ENCODE measurements at regions of chr19 and their contacts with region 1.

Region 1: DNA sequence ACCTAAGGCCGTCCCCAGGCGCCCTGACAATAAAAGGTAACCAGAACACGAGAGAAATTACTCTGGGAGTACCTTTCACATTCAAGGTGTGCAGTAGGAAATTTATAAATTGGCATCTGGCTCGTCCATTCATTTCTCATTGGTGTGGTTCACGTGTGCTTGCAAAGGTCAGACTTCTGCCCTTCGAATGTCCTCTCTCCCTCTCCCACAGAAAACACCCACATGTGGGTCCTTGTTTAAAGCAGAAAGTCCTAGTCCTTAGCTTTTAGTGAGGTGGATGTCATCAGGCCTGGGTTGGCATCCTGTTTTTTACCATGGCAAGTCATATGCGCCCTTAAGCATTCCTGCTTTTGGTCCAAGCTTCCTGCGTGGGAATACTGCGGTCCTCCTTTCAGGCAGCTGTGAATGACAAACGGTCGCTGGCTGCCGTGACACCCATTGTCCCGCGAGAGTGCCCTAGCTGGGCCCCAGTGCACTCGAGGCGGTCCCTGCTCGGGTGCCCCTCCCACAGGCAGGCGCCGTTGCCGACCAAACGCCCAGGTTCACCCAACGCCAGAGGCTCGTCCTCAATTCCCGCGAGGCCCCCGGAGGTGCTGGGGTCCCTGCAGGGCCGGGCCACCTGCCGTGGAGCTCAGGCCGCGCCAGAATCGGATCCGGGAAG is at the start of gene NUDT19:
- DNase-seq: peak; percentile 90
- H3K4me3 Mint-ChIP-seq: peak within 1 kb of the TSS; percentile 93
- H3K27ac Mint-ChIP-seq: peak within 1 kb of the TSS; percentile 88
- H3K4me1 Mint-ChIP-seq: peaks cover 49% of the 10 kb centered on the region
- H3K27me3 Mint-ChIP-seq: no peaks in the 10 kb centered on the region
- total RNA-seq, gene NUDT19: 11.9 to 13.6 TPM

Region 2: DNA sequence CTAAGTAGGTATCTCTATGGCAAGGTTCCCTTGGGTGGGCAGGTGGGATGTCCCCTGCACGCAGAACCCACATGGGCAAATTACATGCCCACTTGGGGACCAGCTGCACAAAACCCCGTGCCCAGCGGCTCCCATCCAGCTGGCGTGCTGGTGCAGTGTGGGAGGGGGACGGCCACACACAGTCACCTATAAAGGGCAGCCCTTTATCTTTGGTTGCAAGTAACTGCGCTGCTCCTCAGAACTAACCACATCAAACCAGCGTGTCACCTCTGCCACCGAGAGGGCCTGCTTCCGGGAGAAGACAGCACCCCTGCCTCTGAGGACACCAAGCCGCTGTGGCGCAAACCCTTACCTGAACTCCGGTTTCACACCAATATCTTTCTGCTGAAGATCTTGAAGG is 48.6 kb before region 1 on chr19:
- CTCF ChIA-PET with region 1: no interaction called
- intact Hi-C with region 1: loop called (anchors 2 kb)
- DNase-seq: peak; percentile 86
- H3K4me3 Mint-ChIP-seq: no peak overlapping the region
- H3K27ac Mint-ChIP-seq: no peak overlapping the region
- H3K4me1 Mint-ChIP-seq: peaks cover 25% of the 10 kb centered on the region
- H3K27me3 Mint-ChIP-seq: no peaks in the 10 kb centered on the region

Region 3: GRCh38 chr19:32735936-32736335 is 44.5 kb after region 1 on chr19:
- CTCF ChIA-PET with region 1: no interaction called
- intact Hi-C with region 1: no loop called
- DNase-seq: no peak
- H3K4me3 Mint-ChIP-seq: no peak overlapping the region
- H3K27ac Mint-ChIP-seq: no peak overlapping the region
- H3K4me1 Mint-ChIP-seq: no peaks in the 10 kb centered on the region
- H3K27me3 Mint-ChIP-seq: peaks cover 17% of the 10 kb centered on the region

Region 4: GRCh38 chr19:32748497-32748896 is 57.1 kb after region 1 on chr19:
- CTCF ChIA-PET with region 1: no interaction called
- intact Hi-C with region 1: loop called (anchors 2 kb)
- DNase-seq: no peak
- H3K4me3 Mint-ChIP-seq: no peak overlapping the region
- H3K27ac Mint-ChIP-seq: no peak overlapping the region
- H3K4me1 Mint-ChIP-seq: peaks cover 14% of the 10 kb centered on the region
- H3K27me3 Mint-ChIP-seq: peaks cover 16% of the 10 kb centered on the region

Region 5: GRCh38 chr19:32914879-32915660 is 223.6 kb after region 1 on chr19:
- CTCF ChIA-PET with region 1: no interaction called
- intact Hi-C with region 1: no loop called
- DNase-seq: no peak
- H3K4me3 Mint-ChIP-seq: no peak overlapping the region
- H3K27ac Mint-ChIP-seq: no peak overlapping the region
- H3K4me1 Mint-ChIP-seq: no peaks in the 10 kb centered on the region
- H3K27me3 Mint-ChIP-seq: no peaks in the 10 kb centered on the region

Region 6: DNA sequence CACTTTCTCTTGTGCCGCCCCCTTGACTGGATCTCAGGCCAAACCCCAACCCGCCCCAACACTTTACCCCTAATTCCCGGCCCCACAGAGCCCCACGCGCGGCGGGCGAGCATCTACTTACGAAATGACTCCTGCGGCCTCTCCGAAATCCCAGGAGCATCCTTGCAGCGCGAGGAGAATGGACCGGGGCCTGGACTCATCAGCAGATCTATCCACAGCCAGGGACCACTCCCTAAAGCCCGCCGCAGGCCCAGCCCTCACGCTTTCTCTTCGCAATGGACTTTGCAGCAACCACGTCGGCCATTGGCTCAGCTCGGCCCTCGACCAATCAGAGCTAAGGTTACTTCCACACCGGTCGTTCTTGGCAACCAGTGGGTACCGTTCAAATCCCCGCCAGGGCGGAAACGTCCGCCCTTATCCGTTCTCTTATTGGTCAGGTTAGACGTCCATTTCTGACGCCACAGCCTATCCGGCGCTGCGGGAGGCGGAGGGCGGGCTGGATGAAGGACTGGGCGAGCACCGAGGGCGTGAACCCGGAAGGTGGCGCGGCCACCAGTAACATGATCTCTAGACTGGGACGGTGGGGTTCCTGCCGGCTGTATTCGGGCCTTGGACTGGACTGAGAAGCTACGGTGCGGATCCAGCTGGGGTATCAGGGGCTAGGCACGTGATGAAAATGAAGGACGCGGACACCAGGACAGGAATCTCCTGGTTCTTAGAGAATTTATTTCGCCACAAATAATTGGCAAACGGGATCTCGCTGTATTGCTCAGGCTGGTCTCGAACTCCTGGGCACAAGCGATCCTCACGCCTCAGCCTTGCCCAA is 280.5 kb after region 1 on chr19 and contains the starts of genes CEP89 and FAAP24:
- CTCF ChIA-PET with region 1: interaction called, 3 read pairs
- intact Hi-C with region 1: loop called (anchors 2 kb)
- DNase-seq: peak; percentile 99
- H3K4me3 Mint-ChIP-seq: peak within 1 kb of the TSS; percentile 97
- H3K27ac Mint-ChIP-seq: peak within 1 kb of the TSS; percentile 90
- H3K4me1 Mint-ChIP-seq: peaks cover 9% of the 10 kb centered on the region
- H3K27me3 Mint-ChIP-seq: no peaks in the 10 kb centered on the region
- total RNA-seq, gene CEP89: 14.6 to 15.5 TPM
- total RNA-seq, gene FAAP24: 9.6 to 10.5 TPM

Region 7: DNA sequence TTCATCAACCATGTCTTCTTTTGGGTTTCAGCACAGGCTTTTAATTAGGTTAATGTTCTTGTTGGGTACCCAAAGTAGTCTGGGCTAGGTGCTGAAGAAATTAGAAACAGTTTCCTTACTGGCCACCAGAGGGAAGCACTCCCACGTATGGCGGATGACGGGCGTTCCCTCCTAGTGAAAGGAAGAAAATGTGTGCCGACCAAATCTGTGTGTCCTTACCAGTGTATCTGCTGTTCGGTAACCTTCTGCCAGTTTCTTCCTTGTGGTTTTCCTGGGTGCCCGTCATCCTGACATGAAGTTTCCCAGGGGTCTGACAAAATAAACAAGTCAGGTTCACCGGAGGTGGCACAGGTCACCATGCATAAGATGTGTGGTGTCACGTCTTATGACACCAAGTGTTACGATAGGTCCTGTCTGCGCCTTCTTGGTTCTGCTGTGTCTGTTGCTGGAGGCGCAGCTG is 434.5 kb after region 1 on chr19:
- CTCF ChIA-PET with region 1: no interaction called
- intact Hi-C with region 1: loop called (anchors 5 kb)
- DNase-seq: peak; percentile 69
- H3K4me3 Mint-ChIP-seq: no peak overlapping the region
- H3K27ac Mint-ChIP-seq: no peak overlapping the region
- H3K4me1 Mint-ChIP-seq: peaks cover 3% of the 10 kb centered on the region
- H3K27me3 Mint-ChIP-seq: no peaks in the 10 kb centered on the region

Region 8: GRCh38 chr19:34171877-34172660 is 1480.6 kb after region 1 on chr19 and contains the start of gene LSM14A:
- CTCF ChIA-PET with region 1: no interaction called
- intact Hi-C with region 1: loop called (anchors 5 kb)
- DNase-seq: peak; percentile 90
- H3K4me3 Mint-ChIP-seq: peak within 1 kb of the TSS; percentile 96
- H3K27ac Mint-ChIP-seq: peak within 1 kb of the TSS; percentile 99
- H3K4me1 Mint-ChIP-seq: peaks cover 38% of the 10 kb centered on the region
- H3K27me3 Mint-ChIP-seq: no peaks in the 10 kb centered on the region
- total RNA-seq, gene LSM14A: 87.9 to 102 TPM